ENCODE measurements at regions of chr9 and their contacts with region 1.

Region 1: DNA sequence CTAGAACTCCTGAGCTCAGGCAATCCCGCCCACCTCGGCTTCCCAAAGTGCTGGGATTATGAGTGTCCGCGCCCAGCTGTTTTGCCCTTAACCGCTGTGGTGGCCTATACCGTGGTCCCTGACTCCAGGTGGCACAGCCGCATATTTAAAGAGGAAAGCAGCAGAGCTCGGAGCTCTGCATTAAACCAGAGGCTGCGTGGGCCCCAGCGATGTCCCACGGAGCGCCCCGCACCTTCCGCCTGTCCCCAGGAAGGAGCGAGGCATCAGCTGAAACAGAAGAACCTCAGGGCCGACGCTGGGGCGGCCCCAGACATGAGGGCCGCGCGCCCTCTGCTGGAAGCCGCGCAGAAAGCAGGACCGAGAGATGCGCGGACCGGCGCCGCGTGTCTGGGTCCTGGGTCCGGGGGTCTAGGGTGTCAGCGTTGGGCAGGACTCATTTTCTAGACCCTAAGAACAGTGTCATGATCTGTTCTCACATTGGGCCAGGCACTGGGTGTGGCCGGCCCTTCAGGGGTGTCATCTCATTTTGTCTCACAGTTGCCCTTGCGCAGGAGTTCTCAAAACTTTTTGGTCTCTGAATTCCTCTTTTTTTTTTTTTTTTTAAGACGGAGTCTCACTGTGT is 37.7 kb downstream of the LAMC3 start:
- DNase-seq: peak; percentile 80
- ATAC-seq: peak; percentile 92

Region 2: GRCh38 chr9:130590305-130590704 is 456.4 kb before region 1 on chr9:
- intact Hi-C with region 1: no loop called
- DNase-seq: no peak
- ATAC-seq: peak; percentile 79

Region 3: GRCh38 chr9:130701056-130702022 is 345.4 kb before region 1 on chr9:
- intact Hi-C with region 1: loop called (anchors 10 kb)
- DNase-seq: peak; percentile 84
- ATAC-seq: peak; percentile 96

Region 4: GRCh38 chr9:130940693-130941576 is 105.8 kb before region 1 on chr9:
- intact Hi-C with region 1: loop called (anchors 10 kb)
- DNase-seq: peak; percentile 76
- ATAC-seq: peak; percentile 84